AG04450 (cell line): ENCODE measurements at regions of chr6 and their contacts with region 1.

Region 1: DNA sequence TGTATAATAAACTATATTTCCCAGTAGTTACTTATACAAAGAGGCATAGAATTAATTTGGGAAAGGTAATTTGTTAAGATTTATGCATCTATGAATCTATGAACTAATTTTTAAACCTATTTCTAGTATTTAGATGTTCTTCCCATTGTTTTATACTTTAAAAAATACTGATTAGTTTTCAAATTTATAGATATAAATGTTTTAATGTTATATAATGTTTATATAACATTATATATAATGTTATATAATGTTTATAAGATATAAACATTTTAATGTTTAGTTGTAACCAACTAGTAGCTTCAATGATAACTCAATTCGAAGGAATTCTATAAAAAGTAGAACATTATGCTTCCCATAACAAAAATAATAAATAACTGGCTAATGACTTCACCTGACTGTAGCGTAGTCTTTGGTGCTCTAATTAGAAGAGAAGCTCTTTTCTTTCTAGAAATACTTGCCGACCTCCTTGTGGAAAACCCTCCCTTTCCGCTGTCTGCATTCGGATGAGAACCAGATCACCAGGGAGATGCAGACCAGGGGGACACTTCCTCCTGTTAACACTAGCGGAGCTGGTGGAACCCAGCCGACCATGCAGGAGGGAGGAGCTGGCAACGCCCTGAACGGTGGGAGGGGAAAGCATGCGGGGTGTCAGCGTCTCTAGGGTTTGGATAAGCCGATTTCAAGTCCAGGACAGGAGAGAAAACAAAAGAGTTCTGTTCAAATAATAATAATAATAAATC is 158.4 kb downstream of the OR2B2 start:
- DNase-seq: peak; percentile 61
- H3K4me3 ChIP-seq: peak overlapping the region; percentile 61
- H3K27ac ChIP-seq: no peak overlapping the region
- H3K27me3 ChIP-seq: peaks cover 13% of the 10 kb centered on the region
- CTCF ChIP-seq: peak; percentile 26; the same call in 1 of the 2 replicates

Region 2: GRCh38 chr6:27126815-27127537 is 626.9 kb before region 1 on chr6:
- CTCF ChIA-PET with region 1: interaction called, 12 read pairs
- POLR2A ChIA-PET with region 1: interaction called, 3 read pairs
- DNase-seq: peak; percentile 82
- H3K4me3 ChIP-seq: peak overlapping the region; percentile 53
- H3K27ac ChIP-seq: peak overlapping the region; percentile 47
- H3K27me3 ChIP-seq: no peaks in the 10 kb centered on the region
- CTCF ChIP-seq: peak; percentile 91

Region 3: GRCh38 chr6:27188885-27189418 is 564.9 kb before region 1 on chr6:
- CTCF ChIA-PET with region 1: interaction called, 18 read pairs
- POLR2A ChIA-PET with region 1: no interaction called
- DNase-seq: peak; percentile 59
- H3K4me3 ChIP-seq: peak overlapping the region; percentile 81
- H3K27ac ChIP-seq: peak overlapping the region; percentile 84
- H3K27me3 ChIP-seq: no peaks in the 10 kb centered on the region
- CTCF ChIP-seq: peak; percentile 74

Region 4: DNA sequence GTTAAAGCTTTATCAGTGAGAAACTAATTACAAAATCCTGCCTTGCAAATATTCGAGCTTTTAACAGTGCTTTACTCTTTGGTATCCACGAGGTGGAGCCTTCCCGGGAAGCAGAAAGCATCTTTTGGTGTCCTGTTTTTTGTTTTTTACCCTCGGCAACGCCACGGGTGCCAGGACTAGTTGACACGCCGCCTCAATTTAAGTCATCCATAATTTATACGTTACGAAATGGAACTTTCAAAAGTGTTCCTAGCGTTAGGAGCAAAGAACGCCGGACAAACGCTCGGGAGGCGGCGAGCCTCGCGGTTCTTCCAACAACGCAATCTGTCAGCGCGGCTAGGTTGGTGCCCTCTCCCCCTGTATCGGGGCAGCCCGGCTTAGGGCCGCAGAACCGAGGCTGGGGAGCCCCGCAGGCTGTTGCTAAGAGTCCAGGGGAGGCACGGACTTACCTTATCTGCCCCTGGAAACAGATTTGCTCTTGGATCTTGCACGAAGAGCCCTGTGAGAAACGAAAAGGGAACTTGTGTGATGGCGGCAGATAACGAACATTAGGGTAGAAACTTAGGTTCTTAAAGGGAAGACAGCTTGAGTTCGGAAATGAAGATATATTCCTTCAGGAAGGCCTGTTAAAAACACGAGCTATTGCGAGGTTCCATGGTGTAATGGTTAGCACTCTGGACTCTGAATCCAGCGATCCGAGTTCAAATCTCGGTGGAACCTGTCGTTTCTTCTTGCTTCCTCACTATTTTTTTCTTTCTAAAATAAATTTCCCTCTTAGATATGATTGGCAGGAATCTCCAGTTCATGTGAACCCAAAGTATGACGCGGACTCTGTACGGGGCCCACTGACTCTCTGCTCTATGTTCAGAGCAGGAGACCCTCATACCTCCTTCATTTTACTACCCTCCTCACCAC is 234.7 kb before region 1 on chr6:
- CTCF ChIA-PET with region 1: interaction called, 18 read pairs
- POLR2A ChIA-PET with region 1: no interaction called
- DNase-seq: peak; percentile 79
- H3K4me3 ChIP-seq: peak overlapping the region; percentile 93
- H3K27ac ChIP-seq: peak overlapping the region; percentile 77
- H3K27me3 ChIP-seq: peaks cover 11% of the 10 kb centered on the region
- CTCF ChIP-seq: peak; percentile 79

Region 5: DNA sequence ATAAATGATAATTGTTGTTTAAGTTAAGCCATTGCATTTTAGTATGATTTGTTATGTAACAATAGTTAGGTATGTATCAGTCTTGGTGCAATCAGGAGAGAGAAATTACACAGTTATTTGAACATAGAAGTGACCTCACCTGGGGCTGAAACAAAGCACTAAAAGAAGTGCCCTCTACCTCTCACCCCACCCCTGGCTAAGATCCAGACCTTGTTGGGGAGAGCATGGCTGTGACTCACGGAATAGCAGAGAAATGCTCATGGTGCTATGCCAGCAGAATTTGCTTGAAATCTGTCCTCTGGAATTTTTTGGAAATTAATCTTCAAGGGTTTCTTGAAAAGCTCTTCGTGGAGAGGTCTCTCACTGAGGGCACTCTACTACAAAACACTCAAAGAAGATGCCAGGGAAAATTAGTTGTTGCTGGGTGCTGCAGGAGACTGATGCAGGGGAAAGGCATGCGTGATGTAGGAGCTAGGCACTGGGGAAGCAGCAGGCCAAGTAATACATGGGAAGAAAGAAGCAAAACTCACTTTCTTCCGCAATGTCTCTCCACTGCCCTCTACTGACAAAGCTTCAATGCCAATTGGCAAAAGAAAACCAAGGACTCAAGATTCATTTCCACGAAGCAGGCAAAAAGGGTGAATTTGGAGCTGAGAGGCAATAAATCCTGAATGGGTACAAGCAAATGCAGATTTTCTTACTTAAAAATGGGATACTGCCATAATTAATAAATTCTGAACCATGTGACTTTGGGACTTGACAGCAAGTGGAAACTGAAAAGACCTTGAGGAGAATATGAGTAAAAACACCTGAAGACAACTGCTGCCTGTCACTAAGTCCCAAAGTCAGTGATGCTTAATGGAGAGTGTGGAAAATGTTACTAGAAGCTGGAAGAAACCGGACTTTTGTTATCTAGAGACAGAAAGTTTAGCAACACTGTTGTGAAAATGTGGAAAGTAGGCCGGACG is 144.6 kb before region 1 on chr6:
- CTCF ChIA-PET with region 1: no interaction called
- POLR2A ChIA-PET with region 1: no interaction called
- DNase-seq: no peak
- H3K4me3 ChIP-seq: no peak overlapping the region
- H3K27ac ChIP-seq: no peak overlapping the region
- H3K27me3 ChIP-seq: no peaks in the 10 kb centered on the region
- CTCF ChIP-seq: peak; percentile 69

Region 6: GRCh38 chr6:27687154-27688013 is 66.5 kb before region 1 on chr6:
- CTCF ChIA-PET with region 1: interaction called, 11 read pairs
- POLR2A ChIA-PET with region 1: no interaction called
- DNase-seq: no peak
- H3K4me3 ChIP-seq: peak overlapping the region; percentile 72
- H3K27ac ChIP-seq: no peak overlapping the region
- H3K27me3 ChIP-seq: no peaks in the 10 kb centered on the region
- CTCF ChIP-seq: peak; percentile 65

Region 7: DNA sequence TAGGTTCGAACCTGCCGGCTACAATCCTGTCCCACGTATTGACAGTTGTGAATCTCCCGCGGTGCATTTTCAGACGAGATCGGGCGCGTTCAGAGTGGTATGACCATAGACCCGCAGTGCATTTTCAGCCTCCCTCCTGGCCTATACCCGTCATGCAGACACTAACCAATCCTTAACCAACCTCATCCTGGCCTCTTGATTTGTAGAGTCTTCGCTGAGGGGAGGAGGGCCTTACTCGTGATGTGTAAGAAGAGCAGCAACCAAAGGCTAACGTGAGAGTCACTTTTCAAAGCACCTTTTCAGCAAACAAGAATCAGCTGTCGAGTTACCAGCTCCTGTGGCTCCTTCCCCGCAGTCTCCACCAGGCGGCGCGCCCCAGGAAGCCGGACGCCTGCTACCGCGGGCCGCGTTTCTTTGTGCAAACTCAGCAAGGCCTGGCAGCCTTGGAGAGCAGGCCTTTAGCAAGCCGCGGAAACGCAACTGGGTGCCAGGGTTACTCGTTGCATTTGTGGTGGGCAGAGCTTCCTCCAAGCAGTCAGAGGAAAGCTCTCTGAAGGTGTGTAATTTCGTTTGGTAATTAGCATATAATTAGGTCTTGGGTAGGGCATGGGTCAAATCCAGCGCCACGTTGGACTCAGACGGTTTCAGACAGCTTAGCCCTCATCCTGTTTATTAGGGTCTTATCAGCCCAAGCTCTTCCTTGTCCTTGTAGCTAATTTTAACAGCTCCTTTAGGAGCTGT is 18.6 kb after region 1 on chr6:
- CTCF ChIA-PET with region 1: interaction called, 38 read pairs
- POLR2A ChIA-PET with region 1: interaction called, 3 read pairs
- DNase-seq: peak; percentile 66
- H3K4me3 ChIP-seq: peak overlapping the region; percentile 31; the same call in 1 of the 2 replicates
- H3K27ac ChIP-seq: no peak overlapping the region
- H3K27me3 ChIP-seq: peaks cover 16% of the 10 kb centered on the region
- CTCF ChIP-seq: peak; percentile 99

Region 8: DNA sequence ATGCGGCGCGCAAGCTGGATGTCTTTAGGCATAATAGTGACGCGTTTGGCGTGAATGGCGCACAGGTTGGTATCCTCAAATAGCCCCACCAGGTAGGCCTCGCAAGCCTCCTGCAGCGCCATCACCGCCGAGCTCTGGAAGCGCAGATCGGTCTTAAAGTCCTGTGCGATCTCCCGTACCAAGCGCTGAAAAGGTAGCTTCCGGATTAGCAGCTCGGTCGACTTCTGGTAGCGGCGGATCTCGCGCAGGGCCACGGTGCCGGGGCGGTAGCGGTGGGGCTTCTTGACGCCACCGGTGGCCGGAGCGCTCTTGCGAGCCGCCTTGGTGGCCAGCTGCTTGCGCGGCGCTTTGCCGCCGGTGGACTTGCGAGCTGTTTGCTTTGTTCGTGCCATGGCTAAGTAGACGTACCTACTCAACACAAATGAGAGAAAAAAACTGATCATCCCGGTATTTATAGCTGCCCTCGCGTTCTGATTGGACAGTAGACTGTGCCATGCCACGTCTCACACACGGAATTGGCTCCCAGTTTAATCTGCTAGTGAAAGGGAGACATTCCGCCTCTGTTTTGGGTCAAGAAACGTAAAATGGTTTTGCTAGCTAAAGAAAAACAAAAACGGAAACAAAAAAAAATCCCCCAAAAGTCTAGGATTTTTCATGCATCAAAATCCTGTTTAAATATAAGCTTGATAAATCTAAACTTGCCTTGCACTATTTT is 118.2 kb after region 1 on chr6:
- CTCF ChIA-PET with region 1: interaction called, 11 read pairs
- POLR2A ChIA-PET with region 1: no interaction called
- DNase-seq: peak; percentile 96
- H3K4me3 ChIP-seq: peak overlapping the region; percentile 69
- H3K27ac ChIP-seq: peak overlapping the region; percentile 94
- H3K27me3 ChIP-seq: no peaks in the 10 kb centered on the region
- CTCF ChIP-seq: peak; percentile 40; the same call in 1 of the 2 replicates